ENCODE measurements at regions of chr2 and their contacts with region 1.

Region 1: DNA sequence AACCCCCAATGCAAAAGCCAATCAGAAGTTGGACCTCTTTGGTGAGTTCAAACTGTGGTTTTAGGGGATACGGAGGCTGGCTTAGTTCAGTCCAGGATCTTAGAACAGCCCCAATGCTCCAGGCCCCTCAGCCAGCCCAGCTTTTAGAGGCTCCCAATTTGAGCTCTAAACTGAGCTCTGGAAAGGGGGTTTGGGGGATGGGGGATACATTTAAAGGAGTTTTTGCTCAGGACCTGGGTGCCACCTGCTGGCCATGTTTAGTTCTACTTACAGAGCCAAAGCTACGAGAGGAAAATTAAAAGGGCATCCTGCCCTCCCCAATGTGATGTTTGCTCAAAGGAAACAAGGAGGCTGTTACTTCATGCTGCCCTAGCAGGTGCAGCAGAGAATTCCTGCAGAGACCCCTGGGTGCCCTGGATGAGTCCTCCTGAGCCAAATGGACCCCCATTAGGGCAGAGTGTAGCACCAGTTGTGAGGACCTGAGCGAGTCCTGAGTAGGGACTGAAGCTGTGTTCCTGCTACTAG is 15.9 kb upstream of the TMEM214 start:
- DNase-seq: peak; percentile 86
- H3K4me3 ChIP-seq: no peak overlapping the region
- H3K27ac ChIP-seq: peak overlapping the region in 1 of 2 experiments; percentile 68; a peak in 1 of 4 replicates
- H3K4me1 ChIP-seq: peaks cover 17 to 21% of the 10 kb centered on the region in 2 experiments; a peak in 2 of 4 replicates
- H3K27me3 ChIP-seq: no peaks in the 10 kb centered on the region
- CTCF ChIP-seq: peak; percentile 90
- EP300 ChIP-seq: no peak
- RAD21 ChIP-seq: peak; percentile 94

Region 2: DNA sequence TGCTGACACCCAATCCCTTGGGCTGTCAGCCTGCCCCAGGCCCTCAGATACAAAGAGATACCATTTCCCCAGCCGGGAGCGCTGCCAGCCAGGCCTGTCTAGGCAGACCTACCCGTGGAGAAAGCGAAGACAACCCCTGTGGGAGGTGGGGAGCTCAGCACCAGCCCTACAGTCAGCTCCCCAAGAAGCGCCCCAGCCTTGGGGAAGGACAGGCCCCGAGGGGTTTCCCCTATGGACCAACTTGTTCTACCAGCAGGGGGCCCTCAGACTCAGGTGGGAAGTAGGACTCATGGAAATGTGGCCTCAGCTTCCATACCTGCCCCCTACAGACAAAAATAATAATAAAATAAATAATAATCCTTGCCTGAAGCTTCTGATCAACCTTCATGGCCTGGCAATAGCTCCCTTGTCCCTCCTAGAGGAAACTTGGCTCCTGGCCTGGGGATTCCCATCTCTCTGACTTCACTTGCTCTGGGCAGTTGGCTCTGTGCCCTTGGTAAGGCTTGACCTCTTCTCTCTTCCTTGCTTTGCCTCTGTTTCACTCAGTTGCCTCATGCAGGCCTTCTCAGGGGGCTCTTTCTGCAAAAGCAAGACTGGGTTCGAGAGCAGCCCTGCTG is 245.8 kb before region 1 on chr2:
- CTCF ChIA-PET with region 1: no interaction called
- POLR2A ChIA-PET with region 1: no interaction called
- DNase-seq: peak; percentile 49
- H3K4me3 ChIP-seq: no peak overlapping the region
- H3K27ac ChIP-seq: peak overlapping the region in 1 of 2 experiments; percentile 19; a peak in 1 of 4 replicates
- H3K4me1 ChIP-seq: peaks cover 20 to 28% of the 10 kb centered on the region in 2 experiments; a peak in 2 of 4 replicates
- H3K27me3 ChIP-seq: no peaks in the 10 kb centered on the region
- CTCF ChIP-seq: peak; percentile 57
- EP300 ChIP-seq: no peak
- RAD21 ChIP-seq: no peak

Region 3: DNA sequence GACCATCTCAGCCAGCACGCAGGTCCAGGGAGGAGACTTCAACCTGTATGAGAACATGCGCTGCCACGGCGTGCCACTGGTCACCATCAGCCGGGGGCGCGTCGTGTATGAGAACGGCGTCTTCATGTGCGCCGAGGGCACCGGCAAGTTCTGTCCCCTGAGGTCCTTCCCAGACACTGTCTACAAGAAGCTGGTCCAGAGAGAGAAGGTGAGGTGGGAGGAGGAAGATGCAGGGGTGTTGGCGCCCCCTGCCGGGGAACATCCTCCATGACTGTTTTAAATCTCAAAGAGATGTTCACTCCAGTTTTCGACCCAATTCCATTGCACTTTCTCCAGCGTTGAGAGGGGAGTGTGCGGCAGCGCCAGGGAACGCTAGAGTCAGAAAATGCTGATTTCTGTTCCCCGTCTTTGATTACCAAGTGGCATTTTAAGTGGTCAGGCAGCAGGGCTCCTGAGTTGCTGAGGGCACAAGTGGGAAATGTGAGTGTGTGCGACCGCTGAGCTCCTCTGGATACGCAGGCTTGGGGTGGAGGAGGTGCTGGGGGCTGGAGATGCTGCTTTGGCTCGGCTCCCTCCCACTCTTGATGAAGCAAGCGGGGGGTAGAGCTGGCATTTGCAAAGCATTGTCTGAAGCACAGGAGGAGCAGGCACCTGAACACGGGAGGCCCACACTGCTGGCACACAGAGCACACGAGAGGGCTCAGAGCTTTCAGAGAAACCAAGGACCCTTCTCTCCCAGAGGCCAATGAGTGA is 74.1 kb before region 1 on chr2:
- CTCF ChIA-PET with region 1: interaction called, 33 read pairs
- POLR2A ChIA-PET with region 1: interaction called, 3 read pairs
- DNase-seq: peak; percentile 90
- H3K4me3 ChIP-seq: no peak overlapping the region
- H3K27ac ChIP-seq: no peak overlapping the region
- H3K4me1 ChIP-seq: peaks cover 0 to 16% of the 10 kb centered on the region in 2 experiments; a peak in 1 of 4 replicates
- H3K27me3 ChIP-seq: peaks cover 38% of the 10 kb centered on the region; the same call in 1 of the 2 replicates
- CTCF ChIP-seq: peak; percentile 77
- EP300 ChIP-seq: no peak
- RAD21 ChIP-seq: peak; percentile 89

Region 4: DNA sequence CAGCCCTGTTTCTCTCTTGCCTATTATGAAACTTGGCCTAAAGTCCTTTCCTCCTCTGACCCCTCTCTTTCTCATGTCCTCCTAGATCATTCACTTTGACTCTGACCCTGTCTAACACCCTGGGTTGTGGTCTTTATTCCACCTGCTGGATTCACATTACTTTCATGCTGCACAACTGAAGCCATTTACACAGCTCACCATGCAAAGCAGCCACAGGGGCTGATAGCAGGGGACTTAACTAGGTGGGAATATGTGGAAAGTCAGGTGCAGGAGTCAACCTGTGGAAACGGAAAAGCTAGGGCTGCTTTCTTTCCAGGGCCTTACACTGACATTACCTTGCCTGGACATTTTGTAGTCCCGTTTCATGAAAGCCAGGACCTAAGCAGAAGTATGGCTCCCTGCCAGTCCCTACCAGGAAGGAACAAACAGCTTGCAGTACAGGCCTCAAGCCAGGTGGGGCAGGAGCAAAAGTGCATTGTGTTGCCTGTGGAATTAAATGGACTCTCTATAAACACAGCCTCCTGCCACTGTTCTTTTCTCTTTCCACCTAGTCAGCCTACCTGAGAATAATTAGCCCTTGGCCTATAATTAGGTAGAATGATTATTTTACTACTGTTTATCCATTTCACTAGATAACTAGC is 34.6 kb before region 1 on chr2:
- CTCF ChIA-PET with region 1: interaction called, 74 read pairs
- POLR2A ChIA-PET with region 1: no interaction called
- DNase-seq: peak; percentile 76
- H3K4me3 ChIP-seq: no peak overlapping the region
- H3K27ac ChIP-seq: peak overlapping the region in 1 of 2 experiments; percentile 56; a peak in 1 of 4 replicates
- H3K4me1 ChIP-seq: peaks cover 0 to 25% of the 10 kb centered on the region in 2 experiments; a peak in 1 of 4 replicates
- H3K27me3 ChIP-seq: no peaks in the 10 kb centered on the region
- CTCF ChIP-seq: peak; percentile 38; the same call in 1 of the 2 replicates
- EP300 ChIP-seq: peak in 1 of 2 experiments; percentile 24; a peak in 1 of 4 replicates
- RAD21 ChIP-seq: peak; percentile 26; the same call in 1 of the 2 replicates

Region 5: DNA sequence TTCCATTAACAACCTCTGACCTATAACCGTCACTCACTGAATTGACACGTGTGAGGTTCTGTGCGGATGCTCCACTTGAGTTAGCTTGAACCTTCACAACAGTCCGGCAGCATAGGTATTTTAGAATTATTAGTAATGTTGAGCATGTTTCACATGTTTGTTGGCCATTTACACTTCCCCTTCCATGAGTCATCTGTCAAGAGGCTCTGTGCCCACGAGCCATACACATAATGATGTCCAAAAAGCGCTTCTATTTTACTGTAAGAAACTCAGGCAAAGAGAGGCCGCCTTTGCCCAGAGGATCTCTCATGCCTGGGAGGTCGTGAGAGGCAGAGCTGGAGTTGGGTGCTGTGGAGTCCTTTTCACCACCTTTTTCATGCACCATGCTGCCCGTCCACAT is 13.0 kb before region 1 on chr2:
- CTCF ChIA-PET with region 1: interaction called, 62 read pairs
- POLR2A ChIA-PET with region 1: no interaction called
- DNase-seq: no peak
- H3K4me3 ChIP-seq: no peak overlapping the region
- H3K27ac ChIP-seq: no peak overlapping the region
- H3K4me1 ChIP-seq: 0 out of 4 replicates have a peak, but pooled peaks cover 0 to 7% of the 10 kb centered on the region in 2 experiments
- H3K27me3 ChIP-seq: no peaks in the 10 kb centered on the region
- CTCF ChIP-seq: no peak
- EP300 ChIP-seq: no peak
- RAD21 ChIP-seq: no peak

Region 6: DNA sequence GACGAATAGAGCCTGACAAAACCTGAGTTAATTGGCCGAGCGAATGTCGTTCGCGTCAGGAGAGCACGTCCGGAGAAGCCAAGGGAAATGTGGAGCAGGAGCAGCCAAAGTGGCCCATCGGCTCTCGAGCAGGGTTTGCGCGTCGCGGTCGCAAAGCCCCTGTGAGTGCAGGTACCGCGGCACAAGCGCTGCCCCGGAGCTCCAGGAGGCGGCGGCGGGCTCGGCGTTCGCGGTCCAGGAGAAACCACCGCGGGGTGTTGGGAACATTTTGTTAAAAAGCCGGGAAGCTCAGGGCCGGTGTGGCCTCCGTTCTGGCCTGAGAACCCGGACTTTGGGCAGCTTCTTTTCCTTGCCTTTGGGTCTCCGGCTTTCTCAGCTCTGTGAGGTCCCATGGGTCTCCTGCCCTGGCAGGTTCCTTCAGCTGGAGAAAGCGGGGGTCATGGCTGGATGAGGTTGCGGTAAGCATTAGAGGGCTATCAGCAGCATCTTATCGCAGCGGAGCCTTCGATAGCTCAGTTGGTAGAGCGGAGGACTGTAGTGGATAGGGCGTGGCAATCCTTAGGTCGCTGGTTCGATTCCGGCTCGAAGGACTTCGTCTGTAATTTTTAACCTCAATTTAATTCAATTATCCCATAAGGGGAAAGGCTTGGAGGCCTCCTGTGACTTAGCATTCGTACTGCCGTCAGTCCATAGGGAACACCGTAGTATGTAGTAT is 33.6 kb after region 1 on chr2:
- CTCF ChIA-PET with region 1: interaction called, 18 read pairs
- POLR2A ChIA-PET with region 1: interaction called, 5 read pairs
- DNase-seq: peak; percentile 93
- H3K4me3 ChIP-seq: peak overlapping the region; percentile 86 to 89
- H3K27ac ChIP-seq: peak overlapping the region; percentile 81 to 98
- H3K4me1 ChIP-seq: peaks cover 10 to 15% of the 10 kb centered on the region in 2 experiments; a peak in 2 of 4 replicates
- H3K27me3 ChIP-seq: no peaks in the 10 kb centered on the region
- CTCF ChIP-seq: peak; percentile 47
- EP300 ChIP-seq: peak in 1 of 2 experiments; percentile 76; a peak in 2 of 4 replicates
- RAD21 ChIP-seq: no peak; the same call in 1 of the 2 replicates

Region 7: DNA sequence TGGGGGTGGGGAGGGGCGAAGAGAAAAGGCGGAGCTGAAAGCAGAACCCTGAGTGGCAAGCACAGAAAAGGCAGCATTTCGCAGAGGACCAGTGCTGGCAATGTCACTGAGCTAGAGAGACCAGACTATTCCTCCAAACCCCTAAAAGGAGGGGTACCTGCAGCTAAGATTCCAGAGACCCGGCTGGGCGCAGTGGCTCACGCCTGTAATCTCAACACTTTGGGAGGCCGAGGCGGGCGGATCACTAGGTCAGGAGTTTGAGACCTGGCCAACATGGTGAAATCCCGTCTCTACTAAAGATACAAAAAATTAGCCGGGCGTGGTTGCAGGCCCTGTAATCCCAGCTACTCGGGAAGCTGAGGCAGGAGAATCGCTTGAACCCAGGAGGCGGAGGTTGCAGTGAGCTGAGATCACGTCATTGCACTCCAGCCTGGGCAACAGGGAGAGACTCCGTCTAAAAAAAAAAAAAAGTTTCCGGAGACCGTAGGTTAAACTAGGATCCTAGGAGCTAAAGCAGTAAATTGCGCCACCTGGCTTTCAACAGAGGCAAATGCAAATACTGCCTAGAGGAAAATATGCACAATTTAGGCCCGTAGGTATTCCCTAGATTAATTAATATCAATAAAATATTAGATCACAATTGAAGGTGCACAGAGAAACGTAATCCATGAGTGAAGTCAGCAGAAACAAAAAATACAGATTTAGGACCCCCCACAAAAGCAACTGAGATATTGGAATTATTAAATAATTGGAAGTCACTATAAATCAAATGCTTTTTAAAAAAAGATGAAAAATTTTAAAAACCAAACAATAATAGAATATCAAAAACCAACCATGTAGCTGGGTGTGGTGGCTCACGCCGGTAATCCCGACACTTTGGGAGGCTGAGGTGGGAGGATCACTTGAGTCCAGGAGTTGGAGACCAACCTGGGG is 286.5 kb after region 1 on chr2:
- CTCF ChIA-PET with region 1: no interaction called
- POLR2A ChIA-PET with region 1: no interaction called
- DNase-seq: peak; percentile 85
- H3K4me3 ChIP-seq: peak overlapping the region in 1 of 2 experiments; percentile 24; a peak in 1 of 4 replicates
- H3K27ac ChIP-seq: no peak overlapping the region
- H3K4me1 ChIP-seq: peaks cover 0 to 15% of the 10 kb centered on the region in 2 experiments; a peak in 1 of 4 replicates
- H3K27me3 ChIP-seq: peaks cover 15% of the 10 kb centered on the region; the same call in 1 of the 2 replicates
- CTCF ChIP-seq: peak; percentile 99
- EP300 ChIP-seq: no peak
- RAD21 ChIP-seq: peak; percentile 79